ENCODE measurements at regions of chr14 and their contacts with region 1.

Region 1: DNA sequence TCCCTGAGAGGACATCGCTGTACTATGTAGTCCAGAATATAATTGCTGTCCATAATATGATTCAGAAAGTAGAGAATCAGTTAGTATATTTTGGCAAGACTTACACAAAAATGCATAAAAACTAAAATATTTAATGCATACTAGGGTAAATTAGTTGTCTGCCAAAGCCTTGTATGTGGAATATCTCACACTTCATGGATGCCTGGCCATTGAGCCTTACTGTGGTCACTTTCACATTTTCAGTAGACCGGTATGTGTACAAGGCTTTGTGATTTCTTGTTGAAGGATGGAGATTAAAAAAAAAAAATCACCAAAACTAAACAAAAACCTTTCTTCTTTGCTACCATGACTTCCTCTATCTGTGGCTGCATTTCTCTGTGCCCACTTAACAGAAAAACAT is 197.3 kb upstream of the DDHD1 start:
- DNase-seq: no peak
- H3K4me3 Mint-ChIP-seq: no peak overlapping the region
- H3K27ac Mint-ChIP-seq: no peak overlapping the region
- H3K4me1 Mint-ChIP-seq: peaks cover 1% of the 10 kb centered on the region
- H3K27me3 Mint-ChIP-seq: no peaks in the 10 kb centered on the region

Region 2: GRCh38 chr14:53384076-53384475 is 33.6 kb after region 1 on chr14:
- CTCF ChIA-PET with region 1: no interaction called
- POLR2A ChIA-PET with region 1: no interaction called
- intact Hi-C with region 1: loop called (anchors 2 kb)
- DNase-seq: no peak
- H3K4me3 Mint-ChIP-seq: no peak overlapping the region
- H3K27ac Mint-ChIP-seq: no peak overlapping the region
- H3K4me1 Mint-ChIP-seq: peaks cover 13% of the 10 kb centered on the region
- H3K27me3 Mint-ChIP-seq: no peaks in the 10 kb centered on the region